ENCODE measurements at regions of chr1 and their contacts with region 1.

Region 1: GRCh38 chr1:23539698-23540266 is 8.7 kb upstream of the E2F2 start:
- DNase-seq: peak; percentile 92
- H3K4me3 ChIP-seq: peak overlapping the region in 2 of 4 donors; percentile 12 to 16
- H3K27ac ChIP-seq: no peak overlapping the region
- H3K4me1 ChIP-seq: peaks cover 0 to 11% (median 8%) of the 10 kb centered on the region in 4 donors
- H3K27me3 ChIP-seq: no peaks in the 10 kb centered on the region
- CTCF ChIP-seq: peak; percentile 78 to 91 (median 88)
- EP300 ChIP-seq: no peak
- POLR2A ChIP-seq: no peak

Region 2: GRCh38 chr1:23496490-23497181 is 43.1 kb before region 1 on chr1:
- intact Hi-C with region 1: loop called (anchors 1 kb)
- DNase-seq: no peak
- H3K4me3 ChIP-seq: no peak overlapping the region
- H3K27ac ChIP-seq: no peak overlapping the region
- H3K4me1 ChIP-seq: peaks cover 0 to 5% (median 0%) of the 10 kb centered on the region in 4 donors
- H3K27me3 ChIP-seq: no peaks in the 10 kb centered on the region
- CTCF ChIP-seq: no peak
- EP300 ChIP-seq: no peak
- POLR2A ChIP-seq: no peak

Region 3: GRCh38 chr1:23699280-23700179 is 159.7 kb after region 1 on chr1:
- intact Hi-C with region 1: no loop called
- DNase-seq: no peak
- H3K4me3 ChIP-seq: no peak overlapping the region
- H3K27ac ChIP-seq: no peak overlapping the region
- H3K4me1 ChIP-seq: peaks cover 0 to 26% (median 15%) of the 10 kb centered on the region in 4 donors
- H3K27me3 ChIP-seq: no peaks in the 10 kb centered on the region
- CTCF ChIP-seq: no peak
- EP300 ChIP-seq: no peak
- POLR2A ChIP-seq: no peak